ENCODE measurements at regions of chr3 and their contacts with region 1.

Region 1: DNA sequence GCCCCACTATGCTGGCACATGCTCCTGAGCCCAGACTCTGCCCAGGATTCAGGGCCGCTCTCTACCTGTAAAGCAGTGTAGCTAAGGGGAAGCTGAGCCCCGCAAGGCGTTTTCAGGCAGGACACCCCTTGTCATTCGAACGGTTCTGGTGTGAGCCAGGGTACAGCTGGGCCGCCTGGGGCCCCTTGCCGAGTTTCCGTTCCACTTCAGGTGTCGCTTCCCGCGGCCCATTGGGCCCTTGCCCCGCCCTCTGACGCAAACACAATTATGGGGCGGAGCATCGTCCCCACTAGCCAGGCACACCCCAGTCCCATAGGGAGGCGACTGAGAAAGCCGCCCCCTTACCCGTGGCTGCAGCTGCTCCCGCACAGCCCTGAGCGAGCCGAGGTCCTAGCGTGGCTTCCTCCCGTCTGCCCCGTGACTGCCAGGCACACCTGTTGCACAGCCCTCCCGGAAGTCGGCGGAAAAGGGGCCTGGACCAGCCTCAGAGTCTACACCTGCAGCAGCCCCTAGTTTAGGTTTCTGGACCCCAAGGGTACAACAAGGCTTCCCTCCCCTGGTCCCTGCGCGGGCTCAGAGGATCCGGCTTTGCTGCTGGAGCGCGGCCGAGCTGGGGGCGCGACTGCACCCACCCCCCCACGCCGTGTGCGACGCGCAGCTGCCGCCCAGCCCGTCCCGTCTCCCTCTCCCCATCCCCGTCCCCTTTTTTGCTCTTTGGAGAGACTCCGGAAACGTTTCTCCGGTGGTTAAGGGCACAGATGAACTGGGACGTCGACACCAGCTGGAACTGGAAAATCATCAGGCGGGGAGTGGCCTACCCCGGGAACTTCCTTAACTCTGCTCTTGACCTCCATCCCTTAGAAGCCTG is at the start of gene PLSCR2:
- DNase-seq: peak; percentile 41 to 81 (median 73)
- H3K4me3 ChIP-seq: peak within 1 kb of the TSS; percentile 58
- H3K4me3 Mint-ChIP-seq: peak within 1 kb of the TSS; percentile 81 to 92 (median 85)
- H3K27ac ChIP-seq: peak within 1 kb of the TSS; percentile 51
- H3K27ac Mint-ChIP-seq: peak within 1 kb of the TSS; percentile 43 to 84 (median 72)
- H3K4me1 ChIP-seq: peaks cover 8% of the 10 kb centered on the region
- H3K4me1 Mint-ChIP-seq: peaks cover 6 to 18% (median 11%) of the 10 kb centered on the region in 3 donors
- H3K27me3 ChIP-seq: no peaks in the 10 kb centered on the region
- H3K27me3 Mint-ChIP-seq: peaks cover 0 to 6% of the 10 kb centered on the region in 2 donors
- total RNA-seq, gene PLSCR2: not detected

Region 2: GRCh38 chr3:146300768-146301167 is 168.6 kb before region 1 on chr3:
- CTCF ChIA-PET with region 1: no interaction called
- POLR2A ChIA-PET with region 1: no interaction called
- DNase-seq: no peak
- H3K4me3 ChIP-seq: no peak overlapping the region
- H3K4me3 Mint-ChIP-seq: no peak overlapping the region
- H3K27ac ChIP-seq: no peak overlapping the region
- H3K27ac Mint-ChIP-seq: no peak overlapping the region
- H3K4me1 ChIP-seq: no peaks in the 10 kb centered on the region
- H3K4me1 Mint-ChIP-seq: no peaks in the 10 kb centered on the region
- H3K27me3 ChIP-seq: no peaks in the 10 kb centered on the region
- H3K27me3 Mint-ChIP-seq: no peaks in the 10 kb centered on the region

Region 3: GRCh38 chr3:146544002-146544928 is 74.9 kb after region 1 on chr3 and contains the start of gene PLSCR1:
- CTCF ChIA-PET with region 1: no interaction called
- POLR2A ChIA-PET with region 1: interaction called, 10 read pairs
- DNase-seq: peak; percentile 49 to 74 (median 65)
- H3K4me3 ChIP-seq: peak within 1 kb of the TSS; percentile 82
- H3K4me3 Mint-ChIP-seq: peak within 1 kb of the TSS; percentile 92 to 98 (median 95)
- H3K27ac ChIP-seq: peak within 1 kb of the TSS; percentile 66
- H3K27ac Mint-ChIP-seq: peak within 1 kb of the TSS; percentile 77 to 99 (median 90)
- H3K4me1 ChIP-seq: peaks cover 37% of the 10 kb centered on the region
- H3K4me1 Mint-ChIP-seq: peaks cover 59 to 68% (median 64%) of the 10 kb centered on the region in 3 donors
- H3K27me3 ChIP-seq: no peaks in the 10 kb centered on the region
- H3K27me3 Mint-ChIP-seq: no peaks in the 10 kb centered on the region
- total RNA-seq, gene PLSCR1: 19.1 to 24.1 TPM

Measured in CD8-positive, alpha-beta memory T cell (primary cell).